ENCODE measurements at regions of chr19 and their contacts with region 1.

Region 1: GRCh38 chr19:56252699-56253422 is 19.7 kb upstream of the EDDM13 start:
- DNase-seq: peak; percentile 80 to 93 (median 81)
- ATAC-seq: peak; percentile 92
- H3K4me3 ChIP-seq: no peak overlapping the region
- H3K27ac ChIP-seq: peak overlapping the region; percentile 52; the same call in 2 of the 3 replicates
- H3K4me1 ChIP-seq: peaks cover 23 to 24% of the 10 kb centered on the region in 2 experiments
- H3K27me3 ChIP-seq: no peaks in the 10 kb centered on the region
- CTCF ChIP-seq: peak; percentile 94 to 96 (median 95)
- EP300 ChIP-seq: no peak
- POLR2A ChIP-seq: no peak
- RAD21 ChIP-seq: peak; percentile 61 to 87

Region 2: DNA sequence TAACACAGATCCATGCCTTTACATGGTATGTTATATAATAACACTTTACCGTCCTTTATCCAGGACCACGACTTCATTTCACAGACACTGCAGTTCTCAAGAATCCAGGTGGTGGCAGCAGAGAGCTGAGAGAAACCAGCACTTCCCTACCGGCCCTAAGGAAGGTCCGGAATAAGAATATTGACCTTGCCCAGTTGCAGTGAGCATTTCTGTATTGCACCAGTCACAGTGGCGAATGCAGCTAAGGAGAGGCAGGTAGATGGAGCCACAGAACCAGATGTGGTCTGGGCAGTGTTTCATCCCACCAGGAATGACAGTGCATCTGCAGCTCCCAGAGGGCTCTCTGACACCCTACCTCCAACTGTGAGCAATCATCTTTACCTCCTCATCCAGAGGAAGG is 176.4 kb before region 1 on chr19:
- CTCF ChIA-PET with region 1: no interaction called
- POLR2A ChIA-PET with region 1: no interaction called
- in situ Hi-C with region 1: loop called (anchors 5 kb)
- intact Hi-C with region 1: no loop called
- DNase-seq: peak; percentile 60 to 72 (median 64)
- ATAC-seq: peak; percentile 86
- H3K4me3 ChIP-seq: no peak overlapping the region
- H3K27ac ChIP-seq: no peak overlapping the region
- H3K4me1 ChIP-seq: peaks cover 3 to 12% of the 10 kb centered on the region in 2 experiments; a peak in 4 of 5 replicates
- H3K27me3 ChIP-seq: no peaks in the 10 kb centered on the region
- CTCF ChIP-seq: peak; percentile 84 to 92 (median 85)
- EP300 ChIP-seq: no peak
- POLR2A ChIP-seq: no peak
- RAD21 ChIP-seq: peak; percentile 60 to 84

Region 3: DNA sequence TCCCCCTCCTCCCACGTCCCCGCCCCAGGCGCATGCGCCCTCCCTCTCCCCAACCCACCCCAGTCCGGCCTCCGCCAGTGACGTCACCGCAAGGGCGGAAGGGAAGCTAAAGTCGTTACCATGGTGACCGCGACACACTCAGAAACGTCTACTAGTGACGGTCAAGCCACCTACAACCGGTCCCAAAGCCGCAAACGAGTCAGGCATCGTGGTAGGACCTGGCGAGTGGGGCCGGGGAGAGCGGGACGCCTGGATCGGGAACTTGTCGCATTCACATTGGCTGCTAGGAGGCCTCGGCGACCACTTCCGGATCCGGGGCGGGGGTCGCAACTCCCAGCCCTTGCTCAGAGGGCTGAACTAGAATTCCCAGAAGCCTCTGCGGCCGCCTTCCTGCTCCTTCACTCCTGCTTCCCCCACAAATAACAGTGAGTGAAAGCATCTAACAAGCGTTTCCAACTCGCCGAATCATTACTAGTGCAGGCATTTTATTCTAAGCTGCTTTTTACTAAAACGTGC is 61.8 kb after region 1 on chr19 and contains the start of gene ZSCAN5A:
- CTCF ChIA-PET with region 1: interaction called, 5 read pairs
- POLR2A ChIA-PET with region 1: interaction called, 3 read pairs
- in situ Hi-C with region 1: no loop called
- intact Hi-C with region 1: loop called (anchors 2 kb)
- DNase-seq: peak; percentile 97 to 99 (median 99)
- ATAC-seq: peak; percentile 86
- H3K4me3 ChIP-seq: peak within 1 kb of the TSS; percentile 77
- H3K27ac ChIP-seq: peak within 1 kb of the TSS; percentile 99
- H3K4me1 ChIP-seq: peaks cover 15 to 17% of the 10 kb centered on the region in 2 experiments
- H3K27me3 ChIP-seq: no peaks in the 10 kb centered on the region
- CTCF ChIP-seq: no peak
- EP300 ChIP-seq: no peak
- POLR2A ChIP-seq: peak; percentile 75
- RAD21 ChIP-seq: no peak
- polyA plus RNA-seq, gene ZSCAN5A: 10.3 to 10.6 TPM

Region 4: GRCh38 chr19:56350416-56351045 is 97.7 kb after region 1 on chr19:
- CTCF ChIA-PET with region 1: interaction called, 20 read pairs
- POLR2A ChIA-PET with region 1: no interaction called
- in situ Hi-C with region 1: no loop called
- intact Hi-C with region 1: loop called (anchors 1 kb)
- DNase-seq: peak; percentile 33 to 76 (median 52)
- ATAC-seq: peak; percentile 63
- H3K4me3 ChIP-seq: no peak overlapping the region
- H3K27ac ChIP-seq: no peak overlapping the region
- H3K4me1 ChIP-seq: peaks cover 12 to 23% of the 10 kb centered on the region in 2 experiments
- H3K27me3 ChIP-seq: no peaks in the 10 kb centered on the region
- CTCF ChIP-seq: peak; percentile 74 to 88 (median 75)
- EP300 ChIP-seq: no peak
- POLR2A ChIP-seq: no peak
- RAD21 ChIP-seq: peak; percentile 66 to 82